Naive thymus-derived CD4-positive, alpha-beta T cell (primary cell): ENCODE measurements at regions of chr2 and their contacts with region 1.

Region 1: DNA sequence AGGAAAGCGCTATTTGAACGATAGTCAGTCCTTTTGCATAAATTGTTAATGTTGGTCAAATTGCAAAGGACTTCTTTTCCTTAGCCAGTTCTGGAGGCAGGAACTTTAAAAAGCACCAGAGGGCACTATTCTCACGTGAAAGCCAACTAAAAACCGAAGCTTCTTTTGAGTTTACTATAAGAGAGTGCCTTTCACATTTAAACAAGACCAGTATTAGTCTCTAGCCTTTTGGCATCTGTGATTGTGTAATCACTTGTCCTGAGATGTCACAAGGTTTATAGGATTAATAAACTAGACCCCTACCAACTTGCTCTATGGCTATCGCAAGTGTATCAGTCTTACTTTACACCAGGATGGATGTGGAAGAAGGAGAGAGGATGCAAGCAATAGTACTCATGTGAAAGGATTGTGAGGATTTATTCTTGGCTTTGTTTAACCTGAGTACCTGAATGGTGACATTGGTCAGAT is 14.4 kb upstream of the STAT4 start:
- DNase-seq: peak in 6 of 9 donors; percentile 22 to 65 (median 52)
- ATAC-seq: peak; percentile 79
- H3K4me3 ChIP-seq: no peak overlapping the region
- H3K4me3 Mint-ChIP-seq: peak overlapping the region in 1 of 10 donors; percentile 50
- H3K27ac ChIP-seq: no peak overlapping the region
- H3K27ac Mint-ChIP-seq: peak overlapping the region in 2 of 9 donors; percentile 51 to 56
- H3K4me1 ChIP-seq: no peaks in the 10 kb centered on the region
- H3K4me1 Mint-ChIP-seq: peaks cover 2 to 18% (median 10%) of the 10 kb centered on the region in 7 donors
- H3K27me3 ChIP-seq: no peaks in the 10 kb centered on the region
- H3K27me3 Mint-ChIP-seq: peaks cover 0 to 8% (median 2%) of the 10 kb centered on the region in 5 donors

Region 2: GRCh38 chr2:190896477-190896876 is 268.7 kb before region 1 on chr2:
- CTCF ChIA-PET with region 1: no interaction called
- POLR2A ChIA-PET with region 1: no interaction called
- intact Hi-C with region 1: no loop called
- DNase-seq: no peak
- ATAC-seq: no peak
- H3K4me3 ChIP-seq: no peak overlapping the region
- H3K4me3 Mint-ChIP-seq: no peak overlapping the region
- H3K27ac ChIP-seq: no peak overlapping the region
- H3K27ac Mint-ChIP-seq: peak overlapping the region in 6 of 9 donors; percentile 13 to 59 (median 38)
- H3K4me1 ChIP-seq: peaks cover 0 to 15% of the 10 kb centered on the region in 2 donors
- H3K4me1 Mint-ChIP-seq: peaks cover 12 to 37% (median 35%) of the 10 kb centered on the region in 7 donors
- H3K27me3 ChIP-seq: no peaks in the 10 kb centered on the region
- H3K27me3 Mint-ChIP-seq: no peaks in the 10 kb centered on the region

Region 3: GRCh38 chr2:191176801-191177438 is 11.7 kb after region 1 on chr2:
- CTCF ChIA-PET with region 1: interaction called, 10 read pairs
- POLR2A ChIA-PET with region 1: no interaction called
- intact Hi-C with region 1: no loop called
- DNase-seq: no peak
- ATAC-seq: no peak
- H3K4me3 ChIP-seq: no peak overlapping the region
- H3K4me3 Mint-ChIP-seq: no peak overlapping the region
- H3K27ac ChIP-seq: no peak overlapping the region
- H3K27ac Mint-ChIP-seq: no peak overlapping the region
- H3K4me1 ChIP-seq: no peaks in the 10 kb centered on the region
- H3K4me1 Mint-ChIP-seq: peaks cover 4 to 46% (median 24%) of the 10 kb centered on the region in 7 donors
- H3K27me3 ChIP-seq: no peaks in the 10 kb centered on the region
- H3K27me3 Mint-ChIP-seq: no peaks in the 10 kb centered on the region

Region 4: GRCh38 chr2:191245046-191245868 is 80.0 kb after region 1 on chr2 and contains the start of gene MYO1B:
- CTCF ChIA-PET with region 1: no interaction called
- POLR2A ChIA-PET with region 1: no interaction called
- intact Hi-C with region 1: loop called (anchors 1 to 2 kb)
- DNase-seq: peak; percentile 18 to 78 (median 31)
- ATAC-seq: peak; percentile 78
- H3K4me3 ChIP-seq: peak within 1 kb of the TSS; percentile 50
- H3K4me3 Mint-ChIP-seq: peak within 1 kb of the TSS; percentile 78 to 90 (median 84)
- H3K27ac ChIP-seq: no peak within 1 kb of the TSS
- H3K27ac Mint-ChIP-seq: peak within 1 kb of the TSS in 4 of 9 donors; percentile 42 to 67 (median 61)
- H3K4me1 ChIP-seq: no peaks in the 10 kb centered on the region
- H3K4me1 Mint-ChIP-seq: peaks cover 6 to 16% (median 9%) of the 10 kb centered on the region in 7 donors
- H3K27me3 ChIP-seq: peaks cover 0 to 4% of the 10 kb centered on the region in 2 donors
- H3K27me3 Mint-ChIP-seq: peaks cover 6 to 37% (median 20%) of the 10 kb centered on the region in 5 donors
- total RNA-seq, gene MYO1B: 0.43 to 14.9 (median 0.54) TPM

Region 5: DNA sequence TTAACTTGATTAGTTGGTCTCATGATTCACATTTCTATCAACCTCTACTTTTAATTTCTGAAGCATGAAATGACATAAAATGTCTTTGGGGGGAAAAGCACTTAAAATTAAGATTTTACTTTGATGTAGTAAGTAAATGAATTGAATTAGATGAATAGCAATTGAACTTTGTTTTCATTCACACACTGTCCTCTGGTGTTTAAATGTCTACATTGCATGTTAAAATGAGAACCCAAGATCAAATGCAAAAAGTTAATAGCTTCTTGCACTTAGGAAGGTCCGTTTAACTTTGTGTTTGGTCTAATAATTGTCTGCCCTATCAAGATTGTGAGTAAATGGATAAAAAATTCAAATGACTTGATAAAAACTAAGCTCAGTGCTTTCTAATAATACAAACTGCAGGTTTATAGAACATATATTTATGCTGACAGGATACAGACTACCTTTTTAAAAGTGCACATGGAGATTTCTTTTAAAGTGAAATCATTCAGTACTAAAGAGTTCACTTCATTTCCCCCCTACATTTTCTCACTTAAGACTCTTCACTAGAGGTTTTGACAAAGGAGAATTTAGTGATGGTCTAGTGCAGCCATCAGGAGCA is 356.5 kb after region 1 on chr2:
- CTCF ChIA-PET with region 1: interaction called, 48 read pairs
- POLR2A ChIA-PET with region 1: no interaction called
- intact Hi-C with region 1: loop called (anchors 1 kb)
- DNase-seq: peak in 5 of 9 donors; percentile 16 to 51 (median 33)
- ATAC-seq: no peak
- H3K4me3 ChIP-seq: no peak overlapping the region
- H3K4me3 Mint-ChIP-seq: no peak overlapping the region
- H3K27ac ChIP-seq: no peak overlapping the region
- H3K27ac Mint-ChIP-seq: no peak overlapping the region
- H3K4me1 ChIP-seq: no peaks in the 10 kb centered on the region
- H3K4me1 Mint-ChIP-seq: no peaks in the 10 kb centered on the region
- H3K27me3 ChIP-seq: no peaks in the 10 kb centered on the region
- H3K27me3 Mint-ChIP-seq: peaks cover 0 to 28% (median 7%) of the 10 kb centered on the region in 5 donors

Region 6: DNA sequence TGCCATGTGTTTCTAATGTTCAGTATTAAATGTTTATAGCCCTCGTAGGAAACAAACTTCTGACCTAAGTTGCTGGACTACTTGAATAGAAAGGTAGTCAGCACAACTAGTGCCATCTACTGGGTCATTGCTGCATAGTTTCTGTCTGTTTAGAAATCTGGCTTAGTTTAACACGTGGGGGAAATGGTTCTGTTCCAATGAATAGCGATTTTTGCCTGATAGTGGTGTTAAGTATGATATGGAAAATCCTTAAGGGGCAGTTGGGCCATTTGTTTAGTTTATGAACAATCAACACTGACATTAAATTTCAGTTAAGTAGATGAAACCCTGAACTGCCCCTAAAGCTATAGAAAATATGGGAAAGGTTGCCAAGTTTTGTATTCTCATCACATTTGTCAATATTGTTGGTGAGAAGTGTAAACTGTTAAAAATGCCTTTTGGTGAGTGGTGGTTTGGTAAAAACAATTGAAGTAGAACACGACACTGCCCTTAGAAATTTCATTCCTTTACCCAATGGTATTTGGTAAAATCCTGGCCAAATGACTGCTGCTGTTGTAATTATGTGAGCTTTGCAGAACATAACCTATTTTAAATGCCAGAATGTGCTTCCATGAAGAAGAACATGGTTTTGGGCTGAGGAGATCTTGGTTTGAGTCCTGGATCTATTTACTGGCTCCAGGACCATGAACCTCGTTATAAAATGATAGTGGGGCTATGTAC is 526.0 kb after region 1 on chr2:
- CTCF ChIA-PET with region 1: no interaction called
- POLR2A ChIA-PET with region 1: no interaction called
- intact Hi-C with region 1: loop called in 1 of 2 experiments (anchors 1 kb)
- DNase-seq: peak in 7 of 9 donors; percentile 44 to 69 (median 61)
- ATAC-seq: peak; percentile 93
- H3K4me3 ChIP-seq: no peak overlapping the region
- H3K4me3 Mint-ChIP-seq: no peak overlapping the region
- H3K27ac ChIP-seq: no peak overlapping the region
- H3K27ac Mint-ChIP-seq: peak overlapping the region in 5 of 9 donors; percentile 31 to 61 (median 44)
- H3K4me1 ChIP-seq: peaks cover 3 to 11% of the 10 kb centered on the region in 2 donors
- H3K4me1 Mint-ChIP-seq: peaks cover 8 to 28% (median 15%) of the 10 kb centered on the region in 7 donors
- H3K27me3 ChIP-seq: no peaks in the 10 kb centered on the region
- H3K27me3 Mint-ChIP-seq: no peaks in the 10 kb centered on the region